AG04450 (cell line): ENCODE measurements at regions of chr19 and their contacts with region 1.

Region 1: DNA sequence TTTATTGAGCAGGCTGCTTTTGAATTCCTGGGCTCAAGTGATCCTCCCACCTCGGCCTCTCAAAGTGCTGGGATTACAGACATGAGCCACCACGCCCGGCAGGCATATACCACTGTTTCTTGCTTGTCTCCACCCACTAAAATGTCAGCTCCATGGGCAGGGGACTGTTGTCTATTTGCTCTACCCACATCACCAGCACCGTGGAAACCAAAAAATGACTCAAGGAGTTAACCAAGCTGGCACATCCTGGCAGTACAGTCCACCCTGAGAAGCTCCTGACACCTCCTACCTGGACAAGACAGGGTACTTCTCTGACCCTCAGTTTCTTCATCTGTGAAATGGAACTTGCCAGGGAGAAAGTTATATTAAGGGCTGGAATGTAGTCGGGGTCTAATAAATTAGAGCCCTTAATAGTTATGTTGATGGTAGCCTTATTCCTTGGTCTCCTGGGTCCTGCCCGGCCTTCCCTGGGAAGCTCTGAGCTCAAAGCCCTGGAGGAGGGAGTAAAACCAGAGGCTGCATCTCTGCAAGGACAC is 13.9 kb downstream of the RDH8 start:
- DNase-seq: no peak
- H3K4me3 ChIP-seq: no peak overlapping the region
- H3K27ac ChIP-seq: peak overlapping the region; percentile 21
- H3K27me3 ChIP-seq: peaks cover 15% of the 10 kb centered on the region
- CTCF ChIP-seq: no peak

Region 2: GRCh38 chr19:9883231-9883758 is 143.9 kb before region 1 on chr19:
- CTCF ChIA-PET with region 1: no interaction called
- POLR2A ChIA-PET with region 1: no interaction called
- DNase-seq: no peak
- H3K4me3 ChIP-seq: no peak overlapping the region
- H3K27ac ChIP-seq: no peak overlapping the region
- H3K27me3 ChIP-seq: no peaks in the 10 kb centered on the region
- CTCF ChIP-seq: no peak

Region 3: DNA sequence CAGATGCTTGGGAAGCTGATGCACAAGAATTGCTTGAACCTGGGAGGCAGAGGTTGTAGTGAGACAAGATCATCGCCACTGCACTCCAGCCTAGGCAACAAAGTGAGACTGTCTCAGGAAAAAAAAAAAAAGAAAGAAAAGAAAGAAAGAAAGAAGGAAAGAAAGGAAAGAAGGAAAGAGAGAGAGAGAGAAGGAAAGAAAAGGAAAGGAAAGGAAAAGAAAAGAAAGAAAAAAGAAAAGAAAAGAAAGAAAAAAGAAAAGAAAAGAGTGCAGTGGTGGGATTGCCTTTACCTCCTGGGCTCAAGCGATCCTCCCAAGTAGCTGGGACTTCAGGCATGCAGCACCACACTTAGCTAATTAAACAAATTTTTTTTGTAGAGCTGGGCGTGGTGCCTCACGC is 103.8 kb before region 1 on chr19:
- CTCF ChIA-PET with region 1: interaction called, 102 read pairs
- POLR2A ChIA-PET with region 1: no interaction called
- DNase-seq: no peak
- H3K4me3 ChIP-seq: no peak overlapping the region
- H3K27ac ChIP-seq: no peak overlapping the region
- H3K27me3 ChIP-seq: no peaks in the 10 kb centered on the region
- CTCF ChIP-seq: no peak

Region 4: GRCh38 chr19:9932835-9933234 is 94.4 kb before region 1 on chr19:
- CTCF ChIA-PET with region 1: interaction called, 102 read pairs
- POLR2A ChIA-PET with region 1: interaction called, 6 read pairs
- DNase-seq: no peak
- H3K4me3 ChIP-seq: no peak overlapping the region
- H3K27ac ChIP-seq: no peak overlapping the region
- H3K27me3 ChIP-seq: peaks cover 22% of the 10 kb centered on the region
- CTCF ChIP-seq: no peak

Region 5: GRCh38 chr19:10085641-10086590 is 58.7 kb after region 1 on chr19 and contains the start of gene SHFL:
- CTCF ChIA-PET with region 1: interaction called, 12 read pairs
- POLR2A ChIA-PET with region 1: no interaction called
- DNase-seq: no peak
- H3K4me3 ChIP-seq: peak within 1 kb of the TSS; percentile 92
- H3K27ac ChIP-seq: no peak within 1 kb of the TSS
- H3K27me3 ChIP-seq: no peaks in the 10 kb centered on the region
- CTCF ChIP-seq: no peak
- polyA plus RNA-seq, gene SHFL: 25.0 and 25.9 TPM in 2 replicates

Region 6: DNA sequence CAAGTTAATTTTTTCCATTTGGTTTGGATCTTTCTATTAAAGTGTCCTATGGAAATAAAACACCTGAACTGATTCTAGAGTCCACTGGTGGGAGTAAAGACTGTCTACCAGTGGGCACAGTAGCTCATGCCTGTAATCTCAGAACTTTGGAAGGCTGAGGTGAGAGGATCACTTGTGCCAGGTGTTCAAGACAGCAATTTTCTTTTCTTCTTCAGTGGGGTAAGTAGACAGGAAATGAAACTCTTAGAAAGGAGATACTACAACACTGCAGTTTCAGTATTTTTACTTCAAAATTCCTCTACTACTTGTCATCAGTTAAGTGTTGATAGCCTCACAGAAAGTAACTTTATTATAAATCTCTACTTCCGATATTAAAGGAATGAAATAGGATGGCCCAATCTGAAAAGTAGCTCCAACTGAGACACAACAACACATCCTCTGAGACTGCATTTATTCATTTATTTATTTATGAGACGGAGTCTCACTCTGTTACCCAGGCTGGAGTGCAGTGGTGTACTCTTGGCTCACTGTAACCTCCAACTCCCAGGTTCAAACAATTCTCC is 141.2 kb after region 1 on chr19:
- CTCF ChIA-PET with region 1: no interaction called
- POLR2A ChIA-PET with region 1: no interaction called
- DNase-seq: no peak
- H3K4me3 ChIP-seq: no peak overlapping the region
- H3K27ac ChIP-seq: no peak overlapping the region
- H3K27me3 ChIP-seq: no peaks in the 10 kb centered on the region
- CTCF ChIP-seq: no peak